ENCODE measurements at regions of chr19 and their contacts with region 1.

Region 1: GRCh38 chr19:5690125-5690954 is at the start of gene RPL36:
- DNase-seq: peak; percentile 97
- H3K4me3 ChIP-seq: peak within 1 kb of the TSS; percentile 54 to 73
- H3K27ac ChIP-seq: peak within 1 kb of the TSS; percentile 86 to 89
- H3K4me1 ChIP-seq: peaks cover 13% of the 10 kb centered on the region
- H3K27me3 ChIP-seq: no peaks in the 10 kb centered on the region
- CTCF ChIP-seq: peak; percentile 91 to 100 (median 99)
- POLR2A ChIP-seq: peak; percentile 85
- total RNA-seq, gene RPL36: 628 to 1,303 TPM

Region 2: GRCh38 chr19:5622463-5623396 is 67.6 kb before region 1 on chr19 and contains the starts of genes SAFB and SAFB2:
- intact Hi-C with region 1: loop called (anchors 2 kb)
- DNase-seq: peak; percentile 98
- H3K4me3 ChIP-seq: peak within 1 kb of the TSS; percentile 89 to 99
- H3K27ac ChIP-seq: peak within 1 kb of the TSS; percentile 96 to 98
- H3K4me1 ChIP-seq: peaks cover 8% of the 10 kb centered on the region
- H3K27me3 ChIP-seq: no peaks in the 10 kb centered on the region
- CTCF ChIP-seq: peak in 2 of 4 experiments; percentile 8 to 26
- POLR2A ChIP-seq: peak; percentile 95
- total RNA-seq, gene SAFB: 63.6 to 182 TPM
- total RNA-seq, gene SAFB2: 37.8 to 118 TPM

Region 3: GRCh38 chr19:5703829-5704818 is 13.8 kb after region 1 on chr19:
- intact Hi-C with region 1: no loop called
- DNase-seq: no peak
- H3K4me3 ChIP-seq: no peak overlapping the region
- H3K27ac ChIP-seq: no peak overlapping the region
- H3K4me1 ChIP-seq: no peaks in the 10 kb centered on the region
- H3K27me3 ChIP-seq: no peaks in the 10 kb centered on the region
- CTCF ChIP-seq: no peak
- POLR2A ChIP-seq: no peak

Region 4: GRCh38 chr19:5719961-5720790 is 29.8 kb after region 1 on chr19 and contains the starts of genes CATSPERD and LONP1:
- intact Hi-C with region 1: loop called (anchors 1 kb)
- DNase-seq: peak; percentile 98
- H3K4me3 ChIP-seq: peak within 1 kb of the TSS; percentile 97 to 99
- H3K27ac ChIP-seq: peak within 1 kb of the TSS; percentile 89 to 90
- H3K4me1 ChIP-seq: peaks cover 9% of the 10 kb centered on the region
- H3K27me3 ChIP-seq: no peaks in the 10 kb centered on the region
- CTCF ChIP-seq: peak; percentile 84 to 98 (median 93)
- POLR2A ChIP-seq: peak; percentile 51
- total RNA-seq, gene CATSPERD: 1.4 TPM in 1 of 2 donors, not detected in the other
- total RNA-seq, gene LONP1: 62.7 to 120 TPM